PC-3 (cell line): ENCODE measurements at regions of chr12 and their contacts with region 1.

Region 1: GRCh38 chr12:18430425-18431048 is 169.2 kb downstream of the PIK3C2G start:
- DNase-seq: peak; percentile 69
- ATAC-seq: peak; percentile 65
- H3K4me3 ChIP-seq: no peak overlapping the region
- H3K27ac ChIP-seq: no peak overlapping the region
- H3K4me1 ChIP-seq: peaks cover 13% of the 10 kb centered on the region
- H3K27me3 ChIP-seq: no peaks in the 10 kb centered on the region
- CTCF ChIP-seq: peak; percentile 83

Region 2: DNA sequence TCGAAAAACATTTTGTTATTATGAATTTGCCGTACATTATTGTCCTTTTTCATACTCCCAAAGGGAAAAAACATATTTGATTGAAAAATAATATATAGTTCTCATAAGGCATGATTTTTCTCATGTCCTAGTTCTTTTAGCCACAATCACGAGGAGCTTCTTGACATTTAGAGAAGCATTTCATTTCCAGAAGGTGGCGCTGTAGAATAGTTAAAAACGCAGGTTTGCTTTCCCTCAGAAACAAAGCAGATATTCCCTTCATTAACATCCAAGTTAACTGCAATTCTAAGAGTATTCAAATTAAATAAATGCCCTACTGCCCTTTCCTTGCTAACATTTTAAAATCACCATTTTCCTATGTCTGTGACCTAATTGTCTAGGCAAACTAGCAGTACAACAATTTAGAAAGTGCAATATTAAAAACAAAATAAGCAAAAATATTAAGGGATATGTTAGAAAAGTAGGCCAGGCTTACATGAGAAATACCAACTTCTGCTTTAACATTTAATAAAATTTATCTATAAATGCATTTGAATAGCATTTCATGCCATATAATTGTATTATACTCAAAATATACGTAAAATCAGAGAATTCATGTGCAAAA is 180.1 kb before region 1 on chr12:
- CTCF ChIA-PET with region 1: no interaction called
- POLR2A ChIA-PET with region 1: no interaction called
- intact Hi-C with region 1: loop called (anchors 5 kb)
- DNase-seq: peak; percentile 75
- ATAC-seq: peak; percentile 24; the same call in 1 of the 2 replicates
- H3K4me3 ChIP-seq: no peak overlapping the region
- H3K27ac ChIP-seq: no peak overlapping the region
- H3K4me1 ChIP-seq: no peaks in the 10 kb centered on the region
- H3K27me3 ChIP-seq: no peaks in the 10 kb centered on the region
- CTCF ChIP-seq: peak; percentile 72

Region 3: GRCh38 chr12:18275981-18276380 is 154.6 kb before region 1 on chr12:
- CTCF ChIA-PET with region 1: no interaction called
- POLR2A ChIA-PET with region 1: no interaction called
- intact Hi-C with region 1: no loop called
- DNase-seq: peak; percentile 64
- ATAC-seq: peak; percentile 80
- H3K4me3 ChIP-seq: no peak overlapping the region
- H3K27ac ChIP-seq: peak overlapping the region; percentile 30; the same call in 1 of the 2 replicates
- H3K4me1 ChIP-seq: peaks cover 24% of the 10 kb centered on the region
- H3K27me3 ChIP-seq: no peaks in the 10 kb centered on the region
- CTCF ChIP-seq: no peak

Region 4: DNA sequence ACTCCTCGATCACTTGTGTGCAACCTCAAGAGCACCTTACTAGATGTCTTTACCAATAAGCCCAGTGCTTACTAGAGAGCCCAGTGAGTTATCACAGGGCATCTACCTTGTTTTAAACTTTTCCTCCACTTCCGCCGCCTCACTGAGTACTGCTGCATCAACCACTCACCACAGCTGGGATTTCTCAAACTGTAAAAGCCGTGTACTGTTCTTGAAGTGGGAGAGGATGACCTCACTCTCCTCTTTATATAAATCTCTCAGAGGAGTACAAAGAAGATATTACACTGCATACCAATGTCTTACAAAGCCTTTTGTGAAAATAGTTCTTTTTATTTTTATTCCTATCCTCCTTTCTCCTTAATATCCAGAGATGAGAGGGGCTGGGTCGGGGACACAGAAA is 213.1 kb after region 1 on chr12:
- CTCF ChIA-PET with region 1: no interaction called
- POLR2A ChIA-PET with region 1: no interaction called
- intact Hi-C with region 1: loop called (anchors 2 kb)
- DNase-seq: no peak
- ATAC-seq: no peak
- H3K4me3 ChIP-seq: no peak overlapping the region
- H3K27ac ChIP-seq: no peak overlapping the region
- H3K4me1 ChIP-seq: no peaks in the 10 kb centered on the region
- H3K27me3 ChIP-seq: no peaks in the 10 kb centered on the region
- CTCF ChIP-seq: no peak

Region 5: GRCh38 chr12:18706798-18707197 is 276.3 kb after region 1 on chr12:
- CTCF ChIA-PET with region 1: interaction called, 3 read pairs
- POLR2A ChIA-PET with region 1: no interaction called
- intact Hi-C with region 1: loop called (anchors 5 kb)
- DNase-seq: peak; percentile 24
- ATAC-seq: no peak
- H3K4me3 ChIP-seq: no peak overlapping the region
- H3K27ac ChIP-seq: no peak overlapping the region
- H3K4me1 ChIP-seq: 0 out of 2 replicates have a peak, but pooled peaks cover 3% of the 10 kb centered on the region
- H3K27me3 ChIP-seq: no peaks in the 10 kb centered on the region
- CTCF ChIP-seq: no peak

Region 6: GRCh38 chr12:19186722-19187661 is 756.5 kb after region 1 on chr12:
- CTCF ChIA-PET with region 1: no interaction called
- POLR2A ChIA-PET with region 1: no interaction called
- intact Hi-C with region 1: loop called (anchors 10 kb)
- DNase-seq: peak; percentile 68
- ATAC-seq: peak; percentile 35; the same call in 1 of the 2 replicates
- H3K4me3 ChIP-seq: no peak overlapping the region
- H3K27ac ChIP-seq: no peak overlapping the region
- H3K4me1 ChIP-seq: peaks cover 5% of the 10 kb centered on the region
- H3K27me3 ChIP-seq: no peaks in the 10 kb centered on the region
- CTCF ChIP-seq: peak; percentile 74